ENCODE measurements at regions of chr11 and their contacts with region 1.

Region 1: DNA sequence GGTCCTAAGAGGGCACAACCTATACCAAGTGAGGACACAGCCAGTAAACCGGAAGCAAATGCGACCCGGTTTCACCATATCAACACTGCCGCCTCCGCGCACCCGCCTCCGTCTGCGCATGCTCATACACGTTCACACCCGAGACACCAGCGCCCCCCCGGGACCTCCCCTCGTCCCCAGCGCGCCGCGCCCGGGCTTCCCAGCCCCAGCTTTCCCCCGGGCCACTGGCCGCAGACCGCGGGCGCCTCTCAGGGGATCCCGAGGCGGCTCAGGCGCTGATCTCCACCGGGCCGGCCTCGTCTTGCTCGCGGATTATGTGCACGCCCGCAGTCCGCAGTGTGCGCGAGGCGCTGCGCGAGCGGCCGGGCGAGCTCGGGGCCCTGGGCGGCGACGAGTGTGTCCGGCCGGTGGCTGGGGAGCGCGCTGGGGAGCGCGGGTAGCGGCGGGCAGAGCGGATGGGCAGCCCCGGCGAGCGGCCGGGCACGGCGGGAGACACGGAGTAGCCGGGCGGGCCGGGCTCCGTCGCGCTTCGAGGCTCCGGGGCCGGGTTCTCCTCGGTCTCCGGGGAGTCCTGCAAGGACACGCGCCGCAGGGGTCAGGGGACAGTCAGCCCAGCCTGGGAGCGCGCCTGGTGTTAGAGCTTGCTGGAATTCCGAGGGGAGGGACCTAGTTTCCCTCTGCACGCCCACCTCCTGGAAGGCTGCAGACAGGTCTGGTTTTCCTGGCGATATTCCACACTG is 2.0 kb downstream of the HEPN1 start:
- DNase-seq: peak; percentile 82 to 91 (median 87)
- ATAC-seq: peak; percentile 59 to 87 (median 82)
- H3K4me3 ChIP-seq: peak overlapping the region; percentile 13 to 64 (median 54)
- H3K27ac ChIP-seq: peak overlapping the region; percentile 62 to 88 (median 72)
- H3K4me1 ChIP-seq: peaks cover 0 to 17% (median 4%) of the 10 kb centered on the region in 12 donors
- H3K27me3 ChIP-seq: peaks cover 0 to 10% (median 3%) of the 10 kb centered on the region in 9 donors
- CTCF ChIP-seq: peak in 5 of 12 donors; percentile 10 to 30 (median 15)
- POLR2A ChIP-seq: peak in 1 of 2 donors; percentile 8

Region 2: DNA sequence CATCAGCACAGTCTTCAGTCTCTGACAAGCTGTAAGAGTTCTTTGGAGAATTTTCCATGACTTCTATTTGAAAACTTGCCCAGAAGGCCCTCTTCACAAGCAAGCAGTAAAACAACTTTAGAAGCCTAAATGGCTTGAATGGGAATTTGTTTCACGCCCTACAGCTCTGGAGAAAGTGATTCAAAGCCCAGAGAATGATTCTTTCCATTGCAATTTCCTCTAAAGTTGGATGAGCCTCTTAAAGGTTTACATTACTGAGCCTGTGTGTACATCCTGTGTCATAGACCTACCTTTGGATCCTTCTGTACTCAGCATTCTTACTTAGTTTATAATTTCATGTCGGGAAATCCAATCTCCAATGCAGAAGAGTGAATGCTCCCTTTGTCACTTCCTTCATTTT is 515.5 kb before region 1 on chr11:
- intact Hi-C with region 1: loop called in 1 of 10 experiments (anchors 5 kb)
- DNase-seq: no peak
- ATAC-seq: no peak
- H3K4me3 ChIP-seq: no peak overlapping the region
- H3K27ac ChIP-seq: no peak overlapping the region
- H3K4me1 ChIP-seq: no peaks in the 10 kb centered on the region
- H3K27me3 ChIP-seq: no peaks in the 10 kb centered on the region
- CTCF ChIP-seq: no peak
- POLR2A ChIP-seq: no peak

Region 3: GRCh38 chr11:124817036-124817435 is 104.0 kb before region 1 on chr11:
- intact Hi-C with region 1: no loop called
- DNase-seq: no peak
- ATAC-seq: no peak
- H3K4me3 ChIP-seq: no peak overlapping the region
- H3K27ac ChIP-seq: no peak overlapping the region
- H3K4me1 ChIP-seq: no peaks in the 10 kb centered on the region
- H3K27me3 ChIP-seq: peaks cover 0 to 24% (median 4%) of the 10 kb centered on the region in 9 donors
- CTCF ChIP-seq: no peak
- POLR2A ChIP-seq: no peak

Region 4: GRCh38 chr11:124875943-124876817 is 44.9 kb before region 1 on chr11:
- intact Hi-C with region 1: loop called in 3 of 10 experiments (anchors 2 to 10 kb)
- DNase-seq: peak; percentile 89 to 91 (median 89)
- ATAC-seq: peak; percentile 79 to 92 (median 90)
- H3K4me3 ChIP-seq: peak overlapping the region; percentile 1 to 82 (median 60)
- H3K27ac ChIP-seq: peak overlapping the region; percentile 70 to 98 (median 88)
- H3K4me1 ChIP-seq: peaks cover 0 to 31% (median 20%) of the 10 kb centered on the region in 12 donors
- H3K27me3 ChIP-seq: peaks cover 0 to 51% (median 14%) of the 10 kb centered on the region in 9 donors
- CTCF ChIP-seq: peak; percentile 47 to 92 (median 76)
- POLR2A ChIP-seq: no peak

Region 5: GRCh38 chr11:124898711-124899110 is 22.3 kb before region 1 on chr11:
- intact Hi-C with region 1: loop called in 2 of 10 experiments (anchors 2 kb)
- DNase-seq: peak in 4 of 5 donors; percentile 63 to 78 (median 68)
- ATAC-seq: peak; percentile 55 to 69 (median 62)
- H3K4me3 ChIP-seq: peak overlapping the region in 4 of 12 donors; percentile 52 to 60 (median 56)
- H3K27ac ChIP-seq: peak overlapping the region; percentile 74 to 93 (median 85)
- H3K4me1 ChIP-seq: peaks cover 0 to 79% (median 38%) of the 10 kb centered on the region in 12 donors
- H3K27me3 ChIP-seq: no peaks in the 10 kb centered on the region
- CTCF ChIP-seq: no peak
- POLR2A ChIP-seq: no peak